MCF 10A (cell line): ENCODE measurements at regions of chr3 and their contacts with region 1.

Region 1: GRCh38 chr3:49104483-49105291 is at the start of gene QARS1:
- DNase-seq: peak; percentile 93
- H3K4me3 Mint-ChIP-seq: peak within 1 kb of the TSS; percentile 98
- H3K27ac Mint-ChIP-seq: peak within 1 kb of the TSS; percentile 90
- H3K4me1 Mint-ChIP-seq: peaks cover 12% of the 10 kb centered on the region
- H3K27me3 Mint-ChIP-seq: no peaks in the 10 kb centered on the region
- CTCF ChIP-seq: no peak
- total RNA-seq, gene QARS1: 114 and 149 TPM in 2 replicates

Region 2: DNA sequence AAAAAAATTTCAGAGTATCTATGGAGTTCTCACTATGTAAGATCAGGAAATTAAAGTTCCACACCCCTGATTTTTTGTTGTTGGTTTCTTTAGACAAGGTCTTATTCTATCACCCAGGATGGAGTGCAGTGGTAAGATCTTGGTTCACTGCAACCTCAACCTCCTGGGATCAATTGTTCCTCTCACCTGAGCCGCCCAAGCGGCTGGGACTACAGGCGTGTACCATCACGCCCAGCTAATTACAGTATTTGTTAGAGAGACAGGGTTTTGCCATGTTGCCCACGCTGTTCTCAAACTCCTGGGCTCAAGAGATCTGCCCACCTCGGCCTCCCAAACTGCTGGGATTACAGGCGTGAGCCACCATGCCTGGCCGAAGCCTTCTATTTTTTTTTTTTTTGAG is 23.3 kb before region 1 on chr3:
- CTCF ChIA-PET with region 1: no interaction called
- POLR2A ChIA-PET with region 1: no interaction called
- intact Hi-C with region 1: no loop called
- DNase-seq: peak; percentile 21
- H3K4me3 Mint-ChIP-seq: no peak overlapping the region
- H3K27ac Mint-ChIP-seq: no peak overlapping the region
- H3K4me1 Mint-ChIP-seq: no peaks in the 10 kb centered on the region
- H3K27me3 Mint-ChIP-seq: no peaks in the 10 kb centered on the region
- CTCF ChIP-seq: no peak

Region 3: GRCh38 chr3:49120438-49121131 is 15.9 kb after region 1 on chr3 and contains the start of gene USP19:
- CTCF ChIA-PET with region 1: no interaction called
- POLR2A ChIA-PET with region 1: interaction called, 10 read pairs
- intact Hi-C with region 1: no loop called
- DNase-seq: peak; percentile 92
- H3K4me3 Mint-ChIP-seq: peak within 1 kb of the TSS; percentile 75
- H3K27ac Mint-ChIP-seq: peak within 1 kb of the TSS; percentile 79
- H3K4me1 Mint-ChIP-seq: peaks cover 6% of the 10 kb centered on the region
- H3K27me3 Mint-ChIP-seq: no peaks in the 10 kb centered on the region
- CTCF ChIP-seq: no peak
- total RNA-seq, gene USP19: 39.3 and 51.4 TPM in 2 replicates

Region 4: GRCh38 chr3:49165771-49166751 is 61.4 kb after region 1 on chr3 and contains the start of gene CCDC71:
- CTCF ChIA-PET with region 1: no interaction called
- POLR2A ChIA-PET with region 1: no interaction called
- intact Hi-C with region 1: no loop called
- DNase-seq: peak; percentile 63
- H3K4me3 Mint-ChIP-seq: peak within 1 kb of the TSS; percentile 84
- H3K27ac Mint-ChIP-seq: peak within 1 kb of the TSS; percentile 85
- H3K4me1 Mint-ChIP-seq: peaks cover 15% of the 10 kb centered on the region
- H3K27me3 Mint-ChIP-seq: no peaks in the 10 kb centered on the region
- CTCF ChIP-seq: no peak
- total RNA-seq, gene CCDC71: 25.7 and 26.0 TPM in 2 replicates

Region 5: GRCh38 chr3:49406571-49407566 is 302.2 kb after region 1 on chr3:
- CTCF ChIA-PET with region 1: no interaction called
- POLR2A ChIA-PET with region 1: no interaction called
- intact Hi-C with region 1: no loop called
- DNase-seq: no peak
- H3K4me3 Mint-ChIP-seq: no peak overlapping the region
- H3K27ac Mint-ChIP-seq: peak overlapping the region; percentile 73
- H3K4me1 Mint-ChIP-seq: peaks cover 38% of the 10 kb centered on the region
- H3K27me3 Mint-ChIP-seq: no peaks in the 10 kb centered on the region
- CTCF ChIP-seq: no peak